Breast epithelium (tissue), 4 donors: ENCODE measurements at regions of chr4 and their contacts with region 1.

Region 1: DNA sequence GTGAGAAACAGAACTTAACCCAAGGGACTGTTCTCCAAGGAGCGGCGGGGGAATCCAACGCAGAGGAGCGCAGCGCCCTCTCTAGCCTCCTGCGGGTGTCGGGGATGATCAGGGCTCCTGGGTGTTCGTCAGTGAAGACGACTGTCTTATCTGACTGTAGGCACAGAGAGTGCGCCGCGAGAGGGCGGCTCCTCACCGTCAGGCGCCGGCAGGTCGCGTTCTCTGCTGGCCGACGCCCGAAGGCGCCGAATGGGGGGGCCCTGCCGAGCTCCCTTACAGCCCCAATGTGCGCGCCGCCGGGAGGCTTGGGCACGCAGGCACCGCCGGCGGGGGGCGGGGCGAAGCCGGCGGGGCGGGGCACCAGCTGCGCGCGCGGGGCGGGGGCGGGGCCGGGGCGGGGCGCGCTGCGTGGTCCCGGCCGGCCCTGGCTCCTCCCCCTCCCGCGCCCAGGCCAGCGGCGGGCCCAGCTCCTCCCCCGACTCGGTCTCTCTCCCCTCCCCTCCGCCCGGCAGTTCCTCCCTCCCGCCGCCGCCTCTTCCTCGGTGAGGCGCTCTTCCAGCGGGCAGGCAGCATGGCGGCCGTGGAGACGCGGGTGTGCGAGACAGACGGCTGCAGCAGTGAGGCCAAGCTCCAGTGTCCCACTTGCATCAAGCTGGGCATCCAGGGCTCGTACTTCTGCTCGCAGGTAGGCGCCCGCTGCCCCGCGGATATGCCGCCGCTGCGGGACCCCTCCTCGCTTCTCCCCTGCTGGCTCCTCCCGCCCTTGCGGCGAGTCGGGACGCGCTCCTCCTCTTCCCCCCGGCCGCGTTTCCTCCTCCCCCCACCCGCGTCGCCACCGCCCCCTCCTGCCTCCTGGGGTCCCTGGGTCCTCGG is at the start of gene METAP1:
- DNase-seq: peak; percentile 86 to 94
- H3K4me3 ChIP-seq: peak within 1 kb of the TSS; percentile 90 to 98 (median 94)
- H3K27ac ChIP-seq: peak within 1 kb of the TSS; percentile 90 to 91
- H3K4me1 ChIP-seq: no peaks in the 10 kb centered on the region
- H3K27me3 ChIP-seq: no peaks in the 10 kb centered on the region
- CTCF ChIP-seq: peak; percentile 47 to 54 (median 50)
- POLR2A ChIP-seq: no peak
- total RNA-seq, gene METAP1: 22.9 to 54.2 (median 36.7) TPM

Region 2: DNA sequence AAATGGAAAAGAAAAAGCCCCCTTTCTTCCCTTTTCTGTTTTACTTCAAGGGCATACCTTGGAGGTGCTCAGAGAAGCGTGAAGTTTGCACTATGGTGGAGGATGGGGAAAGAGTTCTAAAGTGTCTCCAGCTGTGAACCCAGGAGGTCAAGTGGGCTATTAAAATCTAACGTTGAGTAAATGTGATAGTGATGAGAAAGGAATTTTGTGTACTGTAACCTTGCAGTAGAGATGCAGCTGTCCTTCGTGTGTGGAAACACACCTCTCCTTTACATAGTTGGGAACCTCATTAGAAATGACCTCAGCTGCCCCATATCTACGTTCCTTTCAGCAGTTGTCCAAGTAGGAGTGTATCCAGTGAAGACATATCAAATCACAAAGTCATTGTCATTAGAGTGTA is 66.7 kb after region 1 on chr4:
- intact Hi-C with region 1: loop called (anchors 5 kb)
- DNase-seq: no peak
- H3K4me3 ChIP-seq: no peak overlapping the region
- H3K27ac ChIP-seq: no peak overlapping the region
- H3K4me1 ChIP-seq: no peaks in the 10 kb centered on the region
- H3K27me3 ChIP-seq: no peaks in the 10 kb centered on the region
- CTCF ChIP-seq: no peak
- POLR2A ChIP-seq: no peak

Region 3: DNA sequence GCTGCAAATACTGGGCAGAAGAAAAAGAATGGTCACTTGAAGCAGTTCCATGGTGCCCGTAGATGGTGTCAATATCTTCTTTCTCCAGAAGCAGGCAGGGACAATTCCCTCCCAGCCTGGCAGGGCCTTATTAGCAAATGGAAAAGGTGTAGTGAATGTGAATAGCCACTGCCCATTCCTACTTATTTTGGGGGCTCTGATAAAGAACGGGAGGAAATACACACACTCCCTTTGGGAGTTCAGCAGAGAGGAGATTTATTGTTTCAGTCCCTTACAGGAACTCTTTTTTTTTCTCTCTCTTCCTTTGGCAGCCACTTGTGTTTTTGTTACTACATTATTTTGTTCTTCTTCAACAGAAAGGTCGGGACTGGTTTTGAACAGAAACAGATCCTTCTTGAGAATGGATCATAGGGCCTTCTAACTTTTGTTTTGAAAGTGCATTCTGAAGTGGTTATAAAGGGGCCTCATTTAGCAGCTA is 1522.5 kb after region 1 on chr4 and contains the start of gene EMCN:
- intact Hi-C with region 1: no loop called
- DNase-seq: no peak
- H3K4me3 ChIP-seq: peak within 1 kb of the TSS; percentile 24 to 39 (median 34)
- H3K27ac ChIP-seq: peak within 1 kb of the TSS in 1 of 2 donors; percentile 53
- H3K4me1 ChIP-seq: no peaks in the 10 kb centered on the region
- H3K27me3 ChIP-seq: no peaks in the 10 kb centered on the region
- CTCF ChIP-seq: no peak
- POLR2A ChIP-seq: no peak
- total RNA-seq, gene EMCN: 12.0 to 27.5 (median 23.9) TPM